HCT116 (cell line): ENCODE measurements at regions of chr10 and their contacts with region 1.

Region 1: DNA sequence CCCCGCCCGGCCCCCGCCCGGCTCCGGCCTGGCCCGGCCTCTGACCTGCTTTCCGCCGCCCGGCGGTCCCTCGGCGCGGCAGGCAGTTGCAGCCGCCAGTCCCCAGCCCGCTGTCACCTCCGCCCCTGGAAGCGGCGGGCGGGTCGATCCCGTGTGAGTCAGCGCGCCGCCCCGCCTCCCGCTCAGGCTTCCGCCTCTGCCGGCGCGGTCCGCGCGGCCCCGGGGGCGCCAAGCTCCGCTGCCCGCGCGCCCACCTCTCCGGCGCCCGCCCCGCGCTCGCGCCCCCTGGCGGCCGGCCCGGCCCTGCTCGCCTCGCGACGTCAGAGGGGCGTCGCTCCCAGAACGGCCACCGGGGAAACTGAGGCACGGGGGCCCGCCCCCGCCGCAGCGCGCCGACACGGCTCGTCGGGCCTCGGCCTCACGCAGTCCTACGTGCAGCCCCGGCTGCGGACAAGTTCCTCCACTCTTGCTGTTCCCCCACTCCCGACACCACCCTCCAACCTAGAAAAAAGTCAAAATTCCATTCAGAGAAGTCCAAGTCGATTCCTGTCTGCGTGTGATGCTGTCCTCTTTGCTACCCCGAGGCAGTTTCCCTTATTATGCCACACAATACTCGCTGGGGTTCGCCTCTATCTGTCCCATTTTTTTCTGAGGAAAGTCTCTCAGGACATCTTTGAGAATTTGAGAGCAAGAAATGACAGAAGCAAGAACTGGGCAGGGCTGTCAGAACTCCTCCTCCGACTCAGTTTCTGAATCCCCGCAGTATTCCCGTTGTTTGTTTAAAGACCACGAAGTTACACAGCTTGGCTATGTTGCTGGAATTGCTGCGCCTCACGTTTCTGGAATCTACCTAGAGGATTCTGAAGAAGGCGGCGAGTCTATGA is at the start of gene DNMBP:
- DNase-seq: peak; percentile 63
- ATAC-seq: peak; percentile 76
- H3K4me3 ChIP-seq: peak within 1 kb of the TSS; percentile 78 to 93
- H3K27ac ChIP-seq: peak within 1 kb of the TSS; percentile 98
- H3K4me1 ChIP-seq: peaks cover 27 to 46% of the 10 kb centered on the region in 2 experiments
- H3K27me3 ChIP-seq: no peaks in the 10 kb centered on the region
- CTCF ChIP-seq: peak in 2 of 3 experiments; percentile 54 to 56; a peak in 4 of 6 replicates
- POLR2A ChIP-seq: no peak
- RAD21 ChIP-seq: no peak
- total RNA-seq, gene DNMBP: 60.3 TPM

Region 2: DNA sequence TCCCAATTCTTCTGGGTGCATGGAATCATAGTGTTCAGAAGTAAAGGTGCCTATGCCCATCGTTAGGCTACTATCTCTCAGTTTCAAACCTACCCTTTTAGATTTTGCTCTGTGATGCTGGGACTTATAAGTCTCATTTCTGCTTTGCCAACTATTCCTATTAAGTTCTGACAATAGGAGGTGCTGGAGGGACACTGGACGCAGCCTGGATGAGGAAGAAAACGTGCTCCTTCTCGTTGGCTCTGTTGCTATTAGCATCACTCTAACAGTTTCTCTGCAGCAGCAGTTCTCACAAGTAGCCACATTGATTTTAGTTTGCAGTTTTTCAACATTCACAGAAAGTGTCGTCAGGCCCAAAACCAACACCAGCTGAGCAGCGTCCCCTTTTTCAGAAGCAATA is 155.2 kb before region 1 on chr10:
- CTCF ChIA-PET with region 1: interaction called, 4 read pairs
- POLR2A ChIA-PET with region 1: interaction called, 3 read pairs
- RAD21 ChIA-PET with region 1: interaction called in 1 of 2 experiments, 3 read pairs
- intact Hi-C with region 1: loop called (anchors 5 kb)
- DNase-seq: peak; percentile 51
- ATAC-seq: peak; percentile 63
- H3K4me3 ChIP-seq: no peak overlapping the region
- H3K27ac ChIP-seq: no peak overlapping the region
- H3K4me1 ChIP-seq: peaks cover 3 to 7% of the 10 kb centered on the region in 2 experiments; a peak in 2 of 4 replicates
- H3K27me3 ChIP-seq: no peaks in the 10 kb centered on the region
- CTCF ChIP-seq: peak; percentile 60 to 81 (median 71)
- POLR2A ChIP-seq: no peak
- RAD21 ChIP-seq: peak; percentile 94

Region 3: DNA sequence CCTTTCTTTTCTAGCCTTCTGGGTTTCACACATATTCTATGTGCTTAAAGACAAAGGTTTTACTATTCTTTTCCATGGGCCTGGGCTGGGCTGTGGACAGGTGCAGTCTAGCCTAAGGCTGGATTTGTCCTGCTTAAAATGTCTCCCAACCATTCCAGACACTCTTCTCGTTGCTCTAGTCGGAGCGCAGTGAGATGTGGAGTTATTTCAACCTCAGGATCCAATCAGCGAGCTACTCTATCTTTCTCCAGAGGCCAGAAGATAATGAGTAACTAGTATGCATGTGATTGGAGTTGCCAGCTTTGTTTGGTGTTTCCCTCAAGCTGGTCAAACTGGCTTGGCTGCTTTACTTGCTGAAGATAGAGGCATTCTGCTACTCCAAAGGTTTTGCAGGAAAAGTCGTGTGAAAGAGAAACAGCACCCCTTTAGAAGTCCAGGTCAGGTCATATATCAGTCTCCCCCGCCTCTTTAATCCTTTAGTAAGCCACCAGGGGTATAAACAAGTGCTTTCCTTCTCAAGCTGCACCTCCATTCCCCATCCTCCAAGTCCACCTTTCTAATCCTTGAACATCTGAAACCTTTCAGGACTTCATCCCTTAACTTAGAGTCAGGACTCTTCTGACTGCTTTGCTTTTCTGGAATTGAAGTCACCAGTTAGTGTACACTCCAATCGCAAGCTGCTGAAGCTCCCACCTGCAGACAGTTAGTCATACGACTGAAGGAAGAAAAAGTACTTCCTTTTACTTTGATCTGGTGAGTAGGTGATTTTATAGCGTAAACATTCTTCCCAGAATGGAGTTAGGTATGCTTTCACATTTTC is 79.1 kb before region 1 on chr10:
- CTCF ChIA-PET with region 1: no interaction called
- POLR2A ChIA-PET with region 1: no interaction called
- RAD21 ChIA-PET with region 1: interaction called in 1 of 2 experiments, 3 read pairs
- intact Hi-C with region 1: loop called (anchors 1 kb)
- DNase-seq: peak; percentile 89
- ATAC-seq: peak; percentile 76
- H3K4me3 ChIP-seq: peak overlapping the region; percentile 21 to 46
- H3K27ac ChIP-seq: peak overlapping the region; percentile 93
- H3K4me1 ChIP-seq: peaks cover 79 to 80% of the 10 kb centered on the region in 2 experiments
- H3K27me3 ChIP-seq: no peaks in the 10 kb centered on the region
- CTCF ChIP-seq: peak in 2 of 3 experiments; percentile 5 to 17; a peak in 1 of 6 replicates
- POLR2A ChIP-seq: no peak
- RAD21 ChIP-seq: peak; percentile 23; the same call in 1 of the 2 replicates

Region 4: DNA sequence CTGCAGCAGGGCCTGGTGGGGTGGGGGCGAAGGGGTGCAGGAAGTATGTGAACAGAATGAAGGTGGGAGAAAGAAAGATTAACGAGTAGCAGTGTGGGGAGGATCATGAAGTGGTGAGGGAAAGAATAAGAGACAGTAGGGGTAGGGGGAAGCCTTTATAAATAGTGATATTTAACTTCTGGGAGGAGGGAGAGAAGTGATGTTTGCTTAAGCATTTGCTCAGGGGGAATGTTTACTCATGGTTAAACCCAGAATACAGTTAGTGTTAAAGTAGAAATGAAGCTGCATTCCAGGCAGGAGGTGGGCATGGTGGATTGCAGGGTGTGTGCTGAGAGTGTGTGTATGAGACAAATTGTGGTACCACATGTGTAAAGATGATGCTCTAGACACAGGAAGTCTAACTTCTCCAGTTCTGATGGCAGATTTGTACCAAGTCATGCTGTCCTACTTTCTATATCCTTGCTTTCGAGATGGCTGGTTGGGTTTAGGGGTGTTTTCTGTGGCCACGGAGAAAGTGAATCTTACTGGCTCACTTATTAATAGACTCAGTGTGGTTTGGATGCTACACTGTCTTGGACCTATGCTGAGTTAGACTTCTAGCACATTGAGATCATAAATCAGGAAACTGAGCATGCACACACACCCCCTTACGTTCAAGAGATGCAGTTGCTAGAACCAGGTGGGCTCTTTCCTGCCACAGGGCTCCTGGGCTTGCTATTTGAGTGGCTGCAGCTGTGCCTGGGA is 10.3 kb after region 1 on chr10:
- CTCF ChIA-PET with region 1: interaction called, 26 read pairs
- POLR2A ChIA-PET with region 1: interaction called, 5 read pairs
- RAD21 ChIA-PET with region 1: no interaction called
- intact Hi-C with region 1: no loop called
- DNase-seq: no peak
- ATAC-seq: peak; percentile 30; the same call in 1 of the 2 replicates
- H3K4me3 ChIP-seq: no peak overlapping the region
- H3K27ac ChIP-seq: no peak overlapping the region
- H3K4me1 ChIP-seq: peaks cover 13 to 31% of the 10 kb centered on the region in 2 experiments
- H3K27me3 ChIP-seq: no peaks in the 10 kb centered on the region
- CTCF ChIP-seq: no peak
- POLR2A ChIP-seq: no peak
- RAD21 ChIP-seq: no peak

Region 5: GRCh38 chr10:100551196-100551595 is 541.2 kb after region 1 on chr10:
- CTCF ChIA-PET with region 1: no interaction called
- POLR2A ChIA-PET with region 1: no interaction called
- RAD21 ChIA-PET with region 1: no interaction called
- intact Hi-C with region 1: no loop called
- DNase-seq: no peak
- ATAC-seq: no peak
- H3K4me3 ChIP-seq: no peak overlapping the region
- H3K27ac ChIP-seq: no peak overlapping the region
- H3K4me1 ChIP-seq: no peaks in the 10 kb centered on the region
- H3K27me3 ChIP-seq: no peaks in the 10 kb centered on the region
- CTCF ChIP-seq: no peak
- POLR2A ChIP-seq: no peak
- RAD21 ChIP-seq: no peak